ENCODE measurements at regions of chr6 and their contacts with region 1.

Region 1: GRCh38 chr6:138657065-138657425 is 116.5 kb upstream of the CCDC28A start:
- DNase-seq: no peak
- ATAC-seq: no peak
- H3K4me3 ChIP-seq: no peak overlapping the region
- H3K27ac ChIP-seq: no peak overlapping the region
- H3K4me1 ChIP-seq: peaks cover 26% of the 10 kb centered on the region
- H3K27me3 ChIP-seq: no peaks in the 10 kb centered on the region
- CTCF ChIP-seq: no peak

Region 2: DNA sequence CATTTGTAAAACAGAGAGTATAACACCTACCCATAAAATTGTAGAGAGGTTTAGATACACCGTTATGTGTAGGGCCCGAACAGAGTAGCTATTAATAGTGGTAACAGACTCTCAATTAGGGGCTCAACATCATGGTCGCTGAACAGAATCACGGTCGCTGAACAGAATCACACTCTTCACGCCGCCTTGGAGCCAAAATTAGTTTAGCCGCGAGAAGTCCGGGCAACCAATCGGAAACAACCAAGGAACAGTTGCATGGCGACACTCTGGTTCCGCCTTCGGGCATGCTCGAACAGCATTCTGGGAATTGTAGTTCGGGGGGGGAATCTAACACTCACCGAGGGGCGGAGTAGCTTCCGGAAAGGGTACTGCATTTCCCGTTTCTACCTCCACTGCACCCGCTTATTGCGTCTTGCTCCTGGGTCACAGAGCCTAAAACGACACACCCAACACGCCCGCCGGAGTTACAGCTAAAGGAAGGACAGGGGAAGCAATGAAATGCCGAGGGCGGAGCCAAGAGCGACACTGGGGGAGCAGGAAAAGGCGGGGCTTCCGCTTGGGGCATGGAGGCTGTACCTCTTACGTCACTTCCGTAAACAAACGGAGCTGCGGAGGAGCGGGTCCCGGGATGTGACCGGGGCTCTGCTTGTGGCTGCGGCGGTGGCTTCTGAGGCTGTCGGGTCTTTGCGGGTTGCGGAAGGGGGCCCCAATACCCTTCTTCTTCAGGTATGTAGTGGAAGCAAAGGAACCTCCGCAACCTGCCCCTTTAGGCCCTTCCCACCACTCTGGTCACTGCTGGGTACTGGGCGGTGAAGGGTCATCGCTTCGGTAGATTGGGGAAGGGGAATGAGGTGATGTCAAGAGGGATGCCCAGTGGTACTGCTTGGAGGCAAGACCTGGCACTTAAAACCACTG is 116.4 kb after region 1 on chr6 and contains the start of gene CCDC28A:
- CTCF ChIA-PET with region 1: no interaction called
- POLR2A ChIA-PET with region 1: interaction called, 12 read pairs
- in situ Hi-C with region 1: no loop called
- intact Hi-C with region 1: no loop called
- DNase-seq: peak; percentile 91
- ATAC-seq: peak; percentile 97
- H3K4me3 ChIP-seq: peak within 1 kb of the TSS; percentile 71 to 97
- H3K27ac ChIP-seq: peak within 1 kb of the TSS; percentile 99
- H3K4me1 ChIP-seq: peaks cover 5% of the 10 kb centered on the region
- H3K27me3 ChIP-seq: no peaks in the 10 kb centered on the region
- CTCF ChIP-seq: no peak
- total RNA-seq, gene CCDC28A: 4.7 TPM

Measured in Panc1 (cell line).